AG04449 (cell line): ENCODE measurements at regions of chr1 and their contacts with region 1.

Region 1: GRCh38 chr1:156728597-156729462 is at the start of gene ISG20L2:
- DNase-seq: peak; percentile 84
- H3K4me3 ChIP-seq: peak within 1 kb of the TSS; percentile 99
- CTCF ChIP-seq: no peak

Region 2: GRCh38 chr1:156689035-156689952 is 39.5 kb before region 1 on chr1:
- CTCF ChIA-PET with region 1: interaction called, 2,951 read pairs
- POLR2A ChIA-PET with region 1: interaction called, 19 read pairs
- DNase-seq: no peak
- H3K4me3 ChIP-seq: peak overlapping the region; percentile 46
- CTCF ChIP-seq: peak; percentile 92

Region 3: GRCh38 chr1:156751758-156752757 is 23.2 kb after region 1 on chr1:
- CTCF ChIA-PET with region 1: interaction called, 16 read pairs
- POLR2A ChIA-PET with region 1: interaction called, 18 read pairs
- DNase-seq: peak; percentile 72
- H3K4me3 ChIP-seq: peak overlapping the region; percentile 96
- CTCF ChIP-seq: peak; percentile 39

Region 4: DNA sequence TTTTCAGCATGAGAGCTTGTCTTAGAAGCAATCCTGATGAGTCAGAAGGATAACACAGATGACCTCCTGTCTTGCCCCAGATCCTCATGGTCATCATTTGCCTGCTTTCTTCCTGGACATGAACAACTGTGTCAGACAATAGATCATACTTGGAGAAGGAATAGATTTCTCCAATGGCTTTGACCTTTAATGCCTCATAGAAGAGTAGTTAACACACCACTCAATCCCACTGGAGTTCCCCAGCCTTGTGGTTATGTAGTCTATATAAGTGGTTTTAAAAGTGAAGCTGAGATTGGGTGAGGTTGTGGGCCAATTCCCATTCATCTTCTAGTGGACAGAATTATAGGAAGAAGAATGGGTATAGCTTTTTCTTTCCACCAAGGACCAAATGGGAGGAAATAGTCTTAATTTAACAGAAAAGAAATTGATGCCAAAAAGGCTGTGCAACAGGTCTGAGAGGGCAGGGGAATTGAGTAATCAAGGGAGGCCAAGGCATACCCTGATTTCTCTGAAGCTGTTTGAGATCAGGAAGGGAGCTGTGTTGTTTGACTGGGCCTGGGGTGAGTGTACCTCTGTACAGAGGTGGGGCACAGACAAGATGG is 52.9 kb after region 1 on chr1:
- CTCF ChIA-PET with region 1: interaction called, 11 read pairs
- POLR2A ChIA-PET with region 1: interaction called, 4 read pairs
- DNase-seq: no peak
- H3K4me3 ChIP-seq: no peak overlapping the region
- CTCF ChIP-seq: no peak

Region 5: GRCh38 chr1:156860113-156860627 is 131.3 kb after region 1 on chr1:
- CTCF ChIA-PET with region 1: interaction called, 192 read pairs
- POLR2A ChIA-PET with region 1: interaction called, 6 read pairs
- DNase-seq: no peak
- H3K4me3 ChIP-seq: peak overlapping the region; percentile 48
- CTCF ChIP-seq: peak; percentile 86

Region 6: GRCh38 chr1:156910309-156910782 is 181.5 kb after region 1 on chr1:
- CTCF ChIA-PET with region 1: interaction called, 17 read pairs
- POLR2A ChIA-PET with region 1: no interaction called
- DNase-seq: no peak
- H3K4me3 ChIP-seq: no peak overlapping the region
- CTCF ChIP-seq: peak; percentile 84